Transverse colon (tissue), 4 donors: ENCODE measurements at regions of chr17 and their contacts with region 1.

Region 1: DNA sequence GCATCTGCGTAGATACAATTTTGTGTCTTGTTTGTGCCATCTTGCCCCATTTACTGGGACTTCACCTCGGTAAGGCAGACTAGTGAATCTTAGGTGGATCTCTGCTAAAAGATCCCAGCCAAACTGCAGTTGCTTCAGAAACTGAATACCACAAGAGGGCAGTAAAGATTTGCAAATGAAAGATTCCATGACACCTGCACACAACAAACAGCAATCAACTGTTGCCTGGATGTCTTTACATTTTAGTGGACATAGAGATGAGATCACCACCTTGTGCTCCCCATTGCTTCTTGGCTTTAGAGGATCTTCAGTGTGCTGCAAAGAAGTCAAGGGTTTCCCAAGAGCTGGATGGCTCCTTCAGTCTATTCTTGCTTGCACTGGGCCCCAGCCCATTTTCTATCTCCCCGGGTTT is 119.2 kb upstream of the CACNG5 start:
- DNase-seq: no peak
- H3K4me3 ChIP-seq: peak overlapping the region in 1 of 4 donors; percentile 13
- H3K27ac ChIP-seq: peak overlapping the region; percentile 76 to 85 (median 84)
- H3K4me1 ChIP-seq: peaks cover 9 to 50% (median 28%) of the 10 kb centered on the region in 4 donors
- H3K27me3 ChIP-seq: no peaks in the 10 kb centered on the region
- CTCF ChIP-seq: peak; percentile 63 to 84 (median 70)
- EP300 ChIP-seq: no peak
- POLR2A ChIP-seq: no peak

Region 2: GRCh38 chr17:66915204-66916096 is 199.7 kb after region 1 on chr17:
- in situ Hi-C with region 1: loop called in 1 of 4 experiments (anchors 10 kb)
- intact Hi-C with region 1: no loop called
- DNase-seq: peak; percentile 62
- H3K4me3 ChIP-seq: peak overlapping the region in 1 of 4 donors; percentile 29
- H3K27ac ChIP-seq: no peak overlapping the region
- H3K4me1 ChIP-seq: no peaks in the 10 kb centered on the region
- H3K27me3 ChIP-seq: no peaks in the 10 kb centered on the region
- CTCF ChIP-seq: peak in 4 of 5 experiments; percentile 42 to 58 (median 48)
- EP300 ChIP-seq: no peak
- POLR2A ChIP-seq: no peak